ENCODE measurements at regions of chr1 and their contacts with region 1.

Region 1: GRCh38 chr1:31196685-31197084 is 43.0 kb downstream of the NKAIN1 start:
- DNase-seq: peak; percentile 82
- H3K4me3 ChIP-seq: no peak overlapping the region
- H3K27ac ChIP-seq: no peak overlapping the region
- H3K4me1 ChIP-seq: peaks cover 3% of the 10 kb centered on the region
- H3K27me3 ChIP-seq: no peaks in the 10 kb centered on the region
- CTCF ChIP-seq: no peak

Region 2: GRCh38 chr1:30444850-30445249 is 751.8 kb before region 1 on chr1:
- CTCF ChIA-PET with region 1: no interaction called
- dilution Hi-C with region 1: no loop called
- in situ Hi-C with region 1: no loop called
- intact Hi-C with region 1: no loop called
- DNase-seq: peak; percentile 19
- H3K4me3 ChIP-seq: no peak overlapping the region
- H3K27ac ChIP-seq: no peak overlapping the region
- H3K4me1 ChIP-seq: no peaks in the 10 kb centered on the region
- H3K27me3 ChIP-seq: no peaks in the 10 kb centered on the region
- CTCF ChIP-seq: no peak

Region 3: DNA sequence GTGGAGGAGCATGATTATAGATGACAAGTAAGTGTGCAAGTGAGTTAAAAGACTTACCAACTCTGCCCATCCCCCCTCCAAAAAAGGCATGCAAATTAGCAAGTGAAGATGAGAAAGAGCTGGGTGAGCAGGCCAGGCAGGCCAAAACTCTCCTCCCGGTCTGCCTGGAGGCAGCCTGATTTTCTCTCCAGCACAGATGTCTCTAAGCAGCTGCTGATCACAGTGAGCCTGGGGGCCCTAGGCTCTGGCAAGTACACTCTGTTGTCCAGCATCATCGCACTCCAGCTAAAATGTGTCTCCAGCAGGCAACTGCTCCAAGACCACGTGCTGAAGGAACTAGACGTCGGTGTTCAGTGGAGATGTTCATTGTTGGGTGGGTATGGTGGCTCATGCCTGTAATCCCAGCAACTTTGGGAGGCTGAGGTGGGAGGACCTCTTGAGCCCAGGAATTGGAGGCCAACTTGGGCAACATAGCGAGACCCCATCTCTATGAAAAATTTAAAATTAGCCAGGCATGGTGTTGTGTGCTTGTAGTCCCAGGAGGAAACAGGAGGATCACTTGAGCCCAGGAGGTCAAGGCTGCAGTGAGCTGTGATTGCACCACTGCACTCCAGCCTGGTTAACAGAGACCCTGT is 74.5 kb before region 1 on chr1:
- CTCF ChIA-PET with region 1: no interaction called
- dilution Hi-C with region 1: loop called (anchors 5 kb)
- in situ Hi-C with region 1: no loop called
- intact Hi-C with region 1: no loop called
- DNase-seq: no peak
- H3K4me3 ChIP-seq: no peak overlapping the region
- H3K27ac ChIP-seq: no peak overlapping the region
- H3K4me1 ChIP-seq: peaks cover 12% of the 10 kb centered on the region
- H3K27me3 ChIP-seq: no peaks in the 10 kb centered on the region
- CTCF ChIP-seq: no peak

Region 4: GRCh38 chr1:31264790-31265386 is 68.2 kb after region 1 on chr1:
- CTCF ChIA-PET with region 1: no interaction called
- dilution Hi-C with region 1: loop called (anchors 5 kb)
- in situ Hi-C with region 1: no loop called
- intact Hi-C with region 1: no loop called
- DNase-seq: no peak
- H3K4me3 ChIP-seq: no peak overlapping the region
- H3K27ac ChIP-seq: no peak overlapping the region
- H3K4me1 ChIP-seq: no peaks in the 10 kb centered on the region
- H3K27me3 ChIP-seq: no peaks in the 10 kb centered on the region
- CTCF ChIP-seq: no peak

Region 5: GRCh38 chr1:31302709-31303441 is 106.2 kb after region 1 on chr1:
- CTCF ChIA-PET with region 1: no interaction called
- dilution Hi-C with region 1: loop called (anchors 5 kb)
- in situ Hi-C with region 1: no loop called
- intact Hi-C with region 1: no loop called
- DNase-seq: no peak
- H3K4me3 ChIP-seq: no peak overlapping the region
- H3K27ac ChIP-seq: no peak overlapping the region
- H3K4me1 ChIP-seq: peaks cover 15% of the 10 kb centered on the region
- H3K27me3 ChIP-seq: no peaks in the 10 kb centered on the region
- CTCF ChIP-seq: no peak